H1 (cell line): ENCODE measurements at regions of chr1 and their contacts with region 1.

Region 1: DNA sequence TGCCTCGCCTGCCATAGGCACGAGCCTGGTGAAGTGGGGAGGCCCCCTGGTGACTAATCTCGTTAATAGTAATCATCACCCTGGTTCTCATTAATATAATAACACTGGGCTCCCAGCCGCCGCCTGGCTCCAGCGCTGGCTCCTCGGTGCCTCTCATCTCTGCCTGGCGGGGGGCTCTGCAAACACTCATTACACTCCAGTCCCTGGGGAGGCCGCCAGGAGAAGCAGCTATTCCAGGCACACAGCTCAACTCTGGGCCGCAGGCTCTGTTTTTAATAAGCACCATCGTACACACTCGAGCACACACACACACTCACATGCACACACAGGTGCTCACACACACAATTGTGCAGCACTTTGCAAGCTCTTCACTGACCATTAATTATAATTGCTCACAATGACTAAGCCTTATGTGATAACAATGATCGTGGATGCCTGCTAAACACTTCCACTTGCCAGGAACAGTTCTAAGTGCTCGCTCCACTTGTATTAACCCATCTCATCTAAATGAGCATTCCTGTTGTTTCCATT is 52.2 kb downstream of the SDC3 start:
- DNase-seq: no peak
- H3K4me3 ChIP-seq: no peak overlapping the region
- H3K27ac ChIP-seq: no peak overlapping the region
- H3K4me1 ChIP-seq: peaks cover 15 to 33% (median 24%) of the 10 kb centered on the region in 4 experiments
- H3K27me3 ChIP-seq: no peaks in the 10 kb centered on the region
- CTCF ChIP-seq: no peak
- EP300 ChIP-seq: no peak
- POLR2A ChIP-seq: no peak
- RAD21 ChIP-seq: no peak

Region 2: DNA sequence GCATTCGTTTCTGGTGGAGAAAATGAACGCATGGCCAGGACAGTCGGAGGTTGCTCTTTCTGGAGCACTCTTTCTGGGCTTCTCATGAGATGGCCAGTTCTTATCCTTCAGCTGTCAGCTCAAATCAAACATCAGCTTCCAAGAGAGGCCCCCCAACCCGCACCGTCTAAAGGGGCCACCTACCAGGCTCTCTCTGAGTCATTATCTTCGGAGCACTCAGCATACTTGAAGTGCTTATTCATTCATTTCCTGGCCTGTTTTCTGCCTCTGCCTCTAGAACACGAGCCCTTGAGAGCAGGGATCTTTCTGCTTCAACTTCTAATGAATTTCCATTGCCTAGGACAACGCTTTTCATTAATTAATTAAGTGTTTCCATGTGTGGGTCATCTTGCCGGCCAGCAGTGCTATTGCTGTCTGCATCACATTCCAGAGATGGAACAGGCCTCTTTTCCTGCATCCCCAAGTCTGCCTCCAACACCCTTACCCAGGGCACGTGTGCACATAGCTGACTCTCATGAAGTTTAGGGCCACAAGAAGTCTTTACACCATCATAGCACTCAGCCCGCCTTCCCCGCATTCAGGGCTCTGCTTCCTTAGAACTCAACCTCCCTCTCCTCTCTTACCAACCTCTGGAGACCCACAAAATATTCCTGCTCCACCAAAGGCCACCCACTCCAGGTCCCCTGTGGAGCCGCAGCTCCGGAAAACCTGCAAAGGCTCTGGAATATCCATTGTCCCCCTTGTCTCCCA is 46.6 kb before region 1 on chr1:
- CTCF ChIA-PET with region 1: interaction called, 57 read pairs
- POLR2A ChIA-PET with region 1: interaction called, 5 read pairs
- DNase-seq: no peak
- H3K4me3 ChIP-seq: no peak overlapping the region
- H3K27ac ChIP-seq: no peak overlapping the region
- H3K4me1 ChIP-seq: peaks cover 12 to 29% (median 17%) of the 10 kb centered on the region in 4 experiments
- H3K27me3 ChIP-seq: peaks cover 0 to 7% (median 3%) of the 10 kb centered on the region in 4 experiments; a peak in 2 of 7 replicates
- CTCF ChIP-seq: no peak
- EP300 ChIP-seq: no peak
- POLR2A ChIP-seq: no peak
- RAD21 ChIP-seq: no peak

Region 3: DNA sequence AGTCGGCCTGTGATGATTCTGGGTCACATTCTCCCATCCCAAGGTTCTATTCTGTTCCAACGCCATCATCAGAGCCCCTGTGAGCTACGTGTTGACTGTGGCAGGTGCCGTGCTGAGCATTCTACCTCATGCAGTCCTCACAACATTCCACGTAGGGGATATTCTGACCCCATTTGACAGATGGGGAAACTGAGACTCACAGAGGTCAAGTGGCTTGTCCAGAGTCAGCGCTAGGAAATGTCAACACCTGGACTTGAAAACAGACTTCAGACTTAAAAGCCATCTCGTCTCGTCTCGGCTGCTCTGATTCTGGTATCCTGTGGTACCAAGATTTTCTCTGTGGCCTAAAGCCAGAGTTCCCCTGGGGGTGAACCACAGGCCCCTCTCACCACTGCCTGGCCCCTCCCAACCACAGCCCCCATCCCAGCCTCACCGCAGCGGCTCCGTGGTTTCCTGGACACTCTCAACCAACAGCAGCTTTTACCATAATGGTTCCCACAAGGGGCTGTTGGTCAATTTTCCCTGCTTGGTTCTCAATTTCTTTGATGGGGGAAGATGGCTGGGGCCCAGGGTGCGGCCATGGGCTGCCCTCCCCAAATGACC is 12.6 kb after region 1 on chr1:
- CTCF ChIA-PET with region 1: interaction called, 23 read pairs
- POLR2A ChIA-PET with region 1: interaction called, 5 read pairs
- DNase-seq: no peak
- H3K4me3 ChIP-seq: no peak overlapping the region
- H3K27ac ChIP-seq: no peak overlapping the region
- H3K4me1 ChIP-seq: peaks cover 0 to 8% (median 5%) of the 10 kb centered on the region in 4 experiments; a peak in 4 of 7 replicates
- H3K27me3 ChIP-seq: no peaks in the 10 kb centered on the region; a peak in 1 of 7 replicates
- CTCF ChIP-seq: no peak
- EP300 ChIP-seq: no peak
- POLR2A ChIP-seq: no peak
- RAD21 ChIP-seq: no peak